ENCODE measurements at regions of chr12 and their contacts with region 1.

Region 1: DNA sequence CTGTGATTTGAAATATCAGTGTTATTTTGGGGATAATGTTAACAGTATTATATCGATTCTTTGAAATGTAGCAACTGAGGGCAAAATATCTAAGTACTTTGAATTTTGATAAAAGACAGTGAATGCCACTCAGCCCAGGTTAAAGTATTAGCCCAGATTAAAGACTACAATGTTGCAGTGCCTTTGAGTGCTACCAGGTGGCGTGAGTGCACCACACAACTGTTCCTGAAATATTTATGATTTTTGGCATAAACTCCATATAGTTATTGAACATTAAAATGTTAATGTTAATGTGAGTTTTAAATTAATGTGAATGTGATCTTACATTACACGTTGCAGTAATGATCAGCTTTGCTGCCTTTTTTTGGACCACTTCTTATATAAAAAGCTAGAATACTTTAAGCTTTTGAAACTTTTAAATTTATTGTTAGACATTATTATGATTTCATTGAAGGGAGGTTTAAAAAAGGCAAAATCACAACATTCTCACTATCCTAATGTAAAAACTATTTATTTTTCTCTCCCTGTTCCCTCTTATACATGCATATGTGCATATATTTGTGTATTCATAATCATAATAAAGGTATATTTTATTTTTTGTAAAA is 22.5 kb downstream of the MRPS35 start:
- DNase-seq: peak in 4 of 7 donors; percentile 41 to 70 (median 46)
- H3K4me3 ChIP-seq: no peak overlapping the region
- H3K27ac ChIP-seq: no peak overlapping the region
- H3K4me1 ChIP-seq: no peaks in the 10 kb centered on the region
- H3K27me3 ChIP-seq: no peaks in the 10 kb centered on the region
- CTCF ChIP-seq: peak; percentile 63 to 90 (median 86)
- POLR2A ChIP-seq: no peak

Region 2: DNA sequence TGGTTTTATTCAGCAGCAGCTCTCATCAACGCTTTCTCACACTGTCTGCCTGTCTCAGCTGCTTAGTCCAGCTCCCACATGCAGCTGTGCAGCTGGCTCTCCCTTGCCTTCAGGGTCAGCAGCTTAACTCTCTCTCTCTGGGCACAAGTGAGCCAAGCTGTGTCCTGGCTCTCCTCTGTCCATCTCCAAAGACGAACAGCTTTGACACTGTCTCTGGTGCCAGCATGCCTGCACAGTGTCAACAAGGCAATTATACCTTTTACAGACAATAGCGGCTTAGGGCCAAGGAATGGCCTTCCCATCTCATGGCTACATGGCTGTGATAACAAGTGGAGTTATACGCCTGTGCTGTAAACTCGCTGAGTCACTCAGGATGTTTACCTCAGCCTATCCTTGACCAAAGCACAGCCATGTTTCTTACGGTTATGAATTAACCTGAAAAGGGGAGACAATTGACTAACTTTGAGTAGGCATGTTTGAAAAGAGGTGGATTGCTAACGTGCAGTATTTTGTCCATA is 85.3 kb after region 1 on chr12:
- intact Hi-C with region 1: loop called (anchors 5 to 10 kb)
- DNase-seq: peak in 6 of 7 donors; percentile 14 to 55 (median 26)
- H3K4me3 ChIP-seq: no peak overlapping the region
- H3K27ac ChIP-seq: no peak overlapping the region
- H3K4me1 ChIP-seq: peaks cover 0 to 15% of the 10 kb centered on the region in 2 donors
- H3K27me3 ChIP-seq: peaks cover 2% of the 10 kb centered on the region
- CTCF ChIP-seq: no peak
- POLR2A ChIP-seq: no peak

Region 3: DNA sequence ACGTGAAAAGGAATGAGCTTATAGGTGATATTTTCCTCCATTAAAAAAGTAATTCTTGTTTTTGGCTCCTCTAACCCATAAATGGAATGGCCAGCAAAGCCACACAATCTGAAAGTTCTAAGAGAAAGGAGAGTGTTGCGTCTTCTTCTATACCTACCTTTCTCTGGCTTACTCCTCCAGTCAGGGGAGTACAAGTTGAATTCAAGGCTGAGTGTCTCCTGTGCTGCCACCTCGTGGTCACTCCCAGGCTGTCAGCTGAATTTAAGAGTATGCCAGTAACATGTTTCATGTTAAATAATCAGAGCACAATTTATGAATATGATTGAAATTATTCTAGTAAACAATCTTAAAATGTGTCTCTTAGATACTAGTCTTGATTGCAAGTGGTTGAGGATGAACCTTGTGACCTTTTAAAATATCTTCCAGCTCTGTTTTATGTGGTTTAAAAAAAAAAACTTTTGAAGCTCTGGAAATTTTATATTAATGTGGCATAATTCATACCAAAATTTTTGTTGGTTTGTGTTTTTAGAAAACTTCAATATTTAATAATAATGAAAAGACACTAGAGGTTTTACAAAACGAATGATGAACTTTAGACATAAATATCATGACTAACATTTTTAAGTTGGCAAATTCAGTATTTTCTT is 207.7 kb after region 1 on chr12:
- intact Hi-C with region 1: loop called in 1 of 2 experiments (anchors 5 kb)
- DNase-seq: peak; percentile 66 to 93 (median 82)
- H3K4me3 ChIP-seq: no peak overlapping the region
- H3K27ac ChIP-seq: no peak overlapping the region
- H3K4me1 ChIP-seq: no peaks in the 10 kb centered on the region
- H3K27me3 ChIP-seq: no peaks in the 10 kb centered on the region
- CTCF ChIP-seq: peak; percentile 61 to 87 (median 74)
- POLR2A ChIP-seq: no peak

Region 4: GRCh38 chr12:28987538-28988324 is 1254.6 kb after region 1 on chr12:
- intact Hi-C with region 1: no loop called
- DNase-seq: no peak
- H3K4me3 ChIP-seq: no peak overlapping the region
- H3K27ac ChIP-seq: peak overlapping the region in 1 of 5 donors; percentile 11
- H3K4me1 ChIP-seq: no peaks in the 10 kb centered on the region
- H3K27me3 ChIP-seq: no peaks in the 10 kb centered on the region
- CTCF ChIP-seq: no peak
- POLR2A ChIP-seq: no peak